ENCODE measurements at regions of chr18 and their contacts with region 1.

Region 1: DNA sequence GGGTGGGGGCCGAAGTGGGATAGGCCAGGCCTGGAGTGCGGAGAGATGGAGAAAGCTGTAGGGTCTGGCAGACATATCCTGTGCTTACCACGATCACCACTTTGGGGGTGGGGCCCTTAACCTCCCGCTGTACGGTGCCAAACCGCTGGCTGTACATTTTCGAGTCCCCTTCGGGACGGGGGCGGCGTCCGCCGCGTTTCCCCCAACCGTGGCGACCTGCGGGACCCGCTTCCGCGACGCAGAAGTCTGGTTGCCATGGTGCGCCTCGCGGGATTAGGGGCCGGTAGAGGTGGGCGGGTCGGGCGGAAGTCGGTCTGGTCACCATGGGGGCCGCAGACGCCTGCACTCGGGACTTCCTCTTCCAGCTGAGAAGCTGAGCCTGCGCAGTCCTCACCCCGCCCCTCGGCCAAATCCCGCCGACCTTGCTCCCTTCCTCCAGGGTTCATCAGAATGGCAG is at the start of gene CFAP53:
- DNase-seq: peak; percentile 97
- total RNA-seq, gene CFAP53: 0.48 TPM

Region 2: DNA sequence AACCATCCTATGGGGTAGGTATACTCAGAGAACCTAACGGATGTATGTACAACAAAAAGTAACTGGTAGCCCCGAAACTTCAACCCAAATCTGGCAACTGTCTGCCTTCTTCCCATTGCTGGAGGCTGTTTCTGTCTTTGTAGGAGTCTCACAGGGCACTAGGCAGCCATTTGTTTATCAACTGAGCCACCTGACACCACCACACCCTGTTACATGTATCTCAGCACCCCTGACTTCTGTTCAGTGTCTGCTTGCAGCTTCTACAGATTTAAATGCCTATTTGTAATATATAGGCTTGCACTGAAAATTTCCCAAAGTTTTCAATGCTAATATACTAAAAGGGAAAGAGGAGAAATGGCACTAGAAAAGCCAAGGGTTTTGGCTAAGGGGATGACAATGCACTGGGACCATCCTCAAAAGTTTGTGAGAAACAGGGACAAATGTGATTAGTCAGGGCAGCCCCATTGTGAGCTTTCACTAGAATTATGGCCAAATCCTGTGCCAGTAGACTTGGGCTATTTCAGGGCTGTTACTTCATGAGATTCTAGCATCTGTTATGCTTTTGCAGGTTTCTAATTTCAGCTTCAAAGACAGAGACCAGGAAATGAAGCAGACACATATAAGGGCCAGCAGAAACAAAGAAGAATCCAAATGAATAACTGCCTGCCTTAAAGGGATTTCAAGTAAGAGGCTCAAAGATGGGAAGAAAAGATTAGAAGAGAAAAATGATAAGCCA is 174.6 kb before region 1 on chr18:
- intact Hi-C with region 1: no loop called
- DNase-seq: no peak

Region 3: GRCh38 chr18:50287441-50288347 is 21.4 kb after region 1 on chr18 and contains the start of gene CXXC1:
- intact Hi-C with region 1: loop called (anchors 2 kb)
- DNase-seq: peak; percentile 98
- total RNA-seq, gene CXXC1: 33.5 TPM

Region 4: GRCh38 chr18:50492097-50492496 is 225.8 kb after region 1 on chr18:
- intact Hi-C with region 1: no loop called
- DNase-seq: no peak